HAP-1 (cell line): ENCODE measurements at regions of chr2 and their contacts with region 1.

Region 1: GRCh38 chr2:216666461-216667233 is 28.7 kb downstream of the IGFBP5 start:
- DNase-seq: peak; percentile 49 to 78
- H3K4me3 ChIP-seq: no peak overlapping the region
- H3K4me1 ChIP-seq: no peaks in the 10 kb centered on the region
- H3K27me3 ChIP-seq: no peaks in the 10 kb centered on the region

Region 2: DNA sequence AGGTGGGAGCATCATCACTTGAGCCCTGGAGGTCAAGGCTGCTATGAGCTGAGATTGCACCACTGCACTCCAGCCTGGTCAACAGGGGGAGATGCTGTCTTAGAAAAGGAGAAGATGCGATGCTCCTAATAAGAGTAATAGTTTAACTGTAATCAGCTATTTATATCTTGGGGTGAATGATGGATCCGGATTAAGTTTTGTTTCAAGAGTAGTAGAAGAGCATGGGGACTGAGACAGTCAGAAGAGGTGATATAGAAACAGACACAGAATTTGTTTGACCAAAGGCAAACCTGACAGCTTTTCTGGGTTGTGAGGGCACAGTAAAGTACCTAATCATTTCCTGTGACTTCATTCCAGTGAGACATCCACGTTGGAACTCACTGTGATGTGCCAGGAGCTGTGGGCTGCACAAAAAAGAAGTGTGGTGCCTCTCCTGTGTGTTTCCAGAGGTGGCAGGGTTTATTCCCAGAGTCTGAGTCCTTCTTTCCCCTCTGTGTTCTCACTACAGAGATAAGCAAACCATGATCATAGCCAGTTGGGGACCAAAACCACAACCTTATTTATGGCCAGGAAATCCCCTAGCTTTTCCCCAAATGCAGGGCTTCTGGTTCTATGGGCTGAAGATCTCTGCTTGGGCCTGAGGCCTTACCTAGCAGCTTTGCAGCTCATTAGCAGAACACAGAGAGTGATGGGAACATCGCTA is 443.8 kb before region 1 on chr2:
- in situ Hi-C with region 1: loop called (anchors 25 kb)
- DNase-seq: no peak
- H3K4me3 ChIP-seq: no peak overlapping the region
- H3K4me1 ChIP-seq: no peaks in the 10 kb centered on the region
- H3K27me3 ChIP-seq: no peaks in the 10 kb centered on the region

Region 3: GRCh38 chr2:216519154-216519762 is 147.4 kb before region 1 on chr2:
- in situ Hi-C with region 1: loop called (anchors 5 kb)
- DNase-seq: peak; percentile 67 to 80
- H3K4me3 ChIP-seq: no peak overlapping the region
- H3K4me1 ChIP-seq: no peaks in the 10 kb centered on the region
- H3K27me3 ChIP-seq: no peaks in the 10 kb centered on the region